ENCODE measurements at regions of chr12 and their contacts with region 1.

Region 1: GRCh38 chr12:129911428-129912049 is 7.7 kb upstream of the TMEM132D start:
- DNase-seq: peak; percentile 71
- H3K4me3 Mint-ChIP-seq: no peak overlapping the region
- H3K27ac Mint-ChIP-seq: no peak overlapping the region
- H3K4me1 Mint-ChIP-seq: no peaks in the 10 kb centered on the region
- H3K27me3 Mint-ChIP-seq: no peaks in the 10 kb centered on the region

Region 2: GRCh38 chr12:128644664-128645296 is 1266.8 kb before region 1 on chr12:
- intact Hi-C with region 1: loop called (anchors 10 kb)
- DNase-seq: peak; percentile 71
- H3K4me3 Mint-ChIP-seq: no peak overlapping the region
- H3K27ac Mint-ChIP-seq: no peak overlapping the region
- H3K4me1 Mint-ChIP-seq: no peaks in the 10 kb centered on the region
- H3K27me3 Mint-ChIP-seq: no peaks in the 10 kb centered on the region

Region 3: DNA sequence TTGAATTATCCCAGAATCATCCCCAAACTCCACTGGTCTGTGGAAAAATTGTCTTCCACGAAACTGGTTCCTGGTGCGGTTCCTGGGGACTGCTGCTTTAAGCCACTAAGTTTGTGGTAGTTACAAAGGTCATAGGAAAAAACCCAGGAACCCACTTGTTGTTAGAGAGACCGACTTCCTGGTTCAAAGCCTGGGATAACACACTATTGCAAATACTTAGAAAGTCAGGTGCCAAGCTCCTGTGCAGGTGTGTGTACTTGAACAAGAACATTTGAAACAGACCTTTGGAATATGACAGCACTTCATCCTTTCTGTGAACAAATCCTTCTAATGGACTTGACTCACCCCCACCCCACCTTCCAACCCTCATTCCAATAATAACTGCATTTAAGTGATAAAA is 538.7 kb before region 1 on chr12:
- intact Hi-C with region 1: no loop called
- DNase-seq: no peak
- H3K4me3 Mint-ChIP-seq: no peak overlapping the region
- H3K27ac Mint-ChIP-seq: no peak overlapping the region
- H3K4me1 Mint-ChIP-seq: no peaks in the 10 kb centered on the region
- H3K27me3 Mint-ChIP-seq: no peaks in the 10 kb centered on the region

Region 4: DNA sequence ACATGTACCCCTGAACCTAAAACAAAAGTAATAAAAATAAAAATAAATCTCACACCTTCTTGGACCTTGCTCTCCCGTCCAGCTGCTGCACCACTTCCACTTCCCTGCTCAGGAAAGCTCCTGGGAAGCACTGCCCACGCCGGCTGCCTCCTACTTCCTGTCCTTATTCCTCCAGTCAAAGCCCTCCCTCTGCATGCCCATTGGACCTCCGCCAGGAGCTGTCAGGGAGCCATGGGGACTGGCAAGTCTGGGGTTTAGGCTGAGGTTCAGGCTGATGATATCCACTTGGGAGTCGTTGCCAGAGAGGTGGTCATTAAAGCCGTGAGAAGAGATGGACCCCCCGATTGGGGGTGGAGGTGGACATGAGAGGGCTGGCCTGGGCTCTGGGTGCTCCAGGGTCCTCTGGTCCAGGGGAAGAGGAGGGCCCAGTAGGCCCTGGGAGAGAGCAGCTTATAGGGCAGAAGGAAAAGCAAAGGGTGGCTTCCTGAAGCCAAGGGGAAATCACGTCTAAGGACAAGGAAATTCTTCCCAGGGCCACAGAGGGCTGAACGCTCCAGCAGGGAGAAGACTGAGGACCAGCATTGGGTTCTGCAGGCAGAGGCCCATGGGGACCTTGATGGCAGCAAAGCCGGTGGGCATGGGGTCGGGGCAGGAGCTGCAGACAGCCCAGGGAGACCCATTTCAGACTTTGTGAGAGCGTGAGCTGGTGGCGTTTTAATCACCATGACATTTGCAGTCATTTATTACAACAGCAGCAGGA is 329.5 kb after region 1 on chr12:
- intact Hi-C with region 1: no loop called
- DNase-seq: no peak
- H3K4me3 Mint-ChIP-seq: no peak overlapping the region
- H3K27ac Mint-ChIP-seq: no peak overlapping the region
- H3K4me1 Mint-ChIP-seq: no peaks in the 10 kb centered on the region
- H3K27me3 Mint-ChIP-seq: no peaks in the 10 kb centered on the region

Measured in activated CD4-positive, alpha-beta T cell treated with anti-CD3 and anti-CD28 coated beads, Interleukin-2, amount 10 ng/mL, durations not matched to agents 24 days and 14 days (primary cell).